BJ (cell line): ENCODE measurements at regions of chr3 and their contacts with region 1.

Region 1: GRCh38 chr3:191051037-191051436 is 148.0 kb upstream of the OSTN start:
- DNase-seq: no peak
- H3K4me3 ChIP-seq: no peak overlapping the region
- H3K27me3 ChIP-seq: no peaks in the 10 kb centered on the region
- CTCF ChIP-seq: peak; percentile 37

Region 2: GRCh38 chr3:190883973-190884832 is 166.8 kb before region 1 on chr3:
- CTCF ChIA-PET with region 1: interaction called, 29 read pairs
- POLR2A ChIA-PET with region 1: no interaction called
- DNase-seq: no peak
- H3K4me3 ChIP-seq: no peak overlapping the region
- H3K27me3 ChIP-seq: no peaks in the 10 kb centered on the region
- CTCF ChIP-seq: peak; percentile 93